ENCODE measurements at regions of chr2 and their contacts with region 1.

Region 1: DNA sequence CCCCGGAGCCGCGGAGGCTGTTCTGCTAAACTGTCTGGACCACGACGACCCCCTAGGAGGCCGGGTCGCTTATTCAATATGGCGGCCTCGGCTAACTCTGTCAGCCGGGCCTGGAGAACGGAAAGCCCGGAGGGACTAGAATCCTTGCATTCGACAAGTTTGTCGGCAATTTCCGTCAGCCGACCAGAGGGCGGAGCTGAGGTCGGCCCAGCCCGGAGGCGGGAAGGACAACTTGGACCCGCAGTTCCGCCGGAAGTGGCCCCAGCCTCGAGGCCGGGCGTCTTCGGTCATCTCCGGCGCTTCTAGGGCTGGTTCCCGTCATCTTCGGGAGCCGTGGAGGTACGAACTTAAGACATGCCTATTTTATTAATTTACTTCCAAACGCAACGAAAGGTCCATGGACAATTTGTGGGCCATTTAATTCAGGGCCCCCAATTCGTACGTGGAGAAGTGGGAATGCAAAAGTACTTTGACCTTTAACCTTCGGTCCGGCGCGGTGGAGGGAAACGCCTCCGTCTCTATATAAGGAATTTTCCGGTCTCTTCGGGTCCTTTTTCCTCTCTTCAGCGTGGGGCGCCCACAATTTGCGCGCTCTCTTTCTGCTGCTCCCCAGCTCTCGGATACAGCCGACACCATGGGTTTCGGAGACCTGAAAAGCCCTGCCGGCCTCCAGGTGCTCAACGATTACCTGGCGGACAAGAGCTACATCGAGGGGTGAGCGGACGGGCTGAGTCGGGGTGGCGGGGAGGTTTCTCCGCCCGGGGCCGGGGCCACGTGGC is at the starts of genes EEF1B2 and NDUFS1:
- DNase-seq: peak; percentile 98
- ATAC-seq: peak; percentile 88
- H3K4me3 Mint-ChIP-seq: peak within 1 kb of the TSS; percentile 92
- H3K27ac Mint-ChIP-seq: peak within 1 kb of the TSS; percentile 99
- H3K4me1 Mint-ChIP-seq: peaks cover 46% of the 10 kb centered on the region
- H3K27me3 Mint-ChIP-seq: no peaks in the 10 kb centered on the region
- total RNA-seq, gene EEF1B2: 559 to 585 TPM
- total RNA-seq, gene NDUFS1: 65.7 to 69.0 TPM

Region 2: GRCh38 chr2:206085742-206086445 is 73.6 kb before region 1 on chr2 and contains the start of gene INO80D:
- CTCF ChIA-PET with region 1: interaction called, 3 read pairs
- POLR2A ChIA-PET with region 1: interaction called, 16 read pairs
- DNase-seq: peak; percentile 86
- ATAC-seq: peak; percentile 92
- H3K4me3 Mint-ChIP-seq: peak within 1 kb of the TSS; percentile 99
- H3K27ac Mint-ChIP-seq: peak within 1 kb of the TSS; percentile 99
- H3K4me1 Mint-ChIP-seq: peaks cover 24% of the 10 kb centered on the region
- H3K27me3 Mint-ChIP-seq: no peaks in the 10 kb centered on the region
- total RNA-seq, gene INO80D: 24.4 to 24.6 TPM

Measured in activated CD8-positive, alpha-beta T cell treated with anti-CD3 and anti-CD28 coated beads, Interleukin-2, amount 10 ng/mL, durations not matched to agents 7 days and 5 days (primary cell).